Endothelial cell of umbilical vein (primary cell): ENCODE measurements at regions of chr1 and their contacts with region 1.

Region 1: GRCh38 chr1:70034403-70034802 is 171.0 kb downstream of the LRRC40 start:
- DNase-seq: peak; percentile 68
- H3K4me3 ChIP-seq: no peak overlapping the region
- H3K27ac ChIP-seq: no peak overlapping the region
- H3K4me1 ChIP-seq: no peaks in the 10 kb centered on the region
- H3K27me3 ChIP-seq: no peaks in the 10 kb centered on the region
- CTCF ChIP-seq: peak; percentile 26 to 29
- POLR2A ChIP-seq: no peak

Region 2: GRCh38 chr1:70083519-70083918 is 49.1 kb after region 1 on chr1:
- CTCF ChIA-PET with region 1: no interaction called
- POLR2A ChIA-PET with region 1: no interaction called
- dilution Hi-C with region 1: no loop called
- intact Hi-C with region 1: no loop called
- DNase-seq: no peak
- H3K4me3 ChIP-seq: no peak overlapping the region
- H3K27ac ChIP-seq: no peak overlapping the region
- H3K4me1 ChIP-seq: no peaks in the 10 kb centered on the region
- H3K27me3 ChIP-seq: no peaks in the 10 kb centered on the region
- CTCF ChIP-seq: no peak
- POLR2A ChIP-seq: no peak

Region 3: GRCh38 chr1:70134148-70134547 is 99.7 kb after region 1 on chr1:
- CTCF ChIA-PET with region 1: interaction called, 5 read pairs
- POLR2A ChIA-PET with region 1: no interaction called
- dilution Hi-C with region 1: no loop called
- intact Hi-C with region 1: loop called (anchors 2 kb)
- DNase-seq: no peak
- H3K4me3 ChIP-seq: no peak overlapping the region
- H3K27ac ChIP-seq: no peak overlapping the region
- H3K4me1 ChIP-seq: no peaks in the 10 kb centered on the region
- H3K27me3 ChIP-seq: no peaks in the 10 kb centered on the region
- CTCF ChIP-seq: no peak
- POLR2A ChIP-seq: no peak

Region 4: DNA sequence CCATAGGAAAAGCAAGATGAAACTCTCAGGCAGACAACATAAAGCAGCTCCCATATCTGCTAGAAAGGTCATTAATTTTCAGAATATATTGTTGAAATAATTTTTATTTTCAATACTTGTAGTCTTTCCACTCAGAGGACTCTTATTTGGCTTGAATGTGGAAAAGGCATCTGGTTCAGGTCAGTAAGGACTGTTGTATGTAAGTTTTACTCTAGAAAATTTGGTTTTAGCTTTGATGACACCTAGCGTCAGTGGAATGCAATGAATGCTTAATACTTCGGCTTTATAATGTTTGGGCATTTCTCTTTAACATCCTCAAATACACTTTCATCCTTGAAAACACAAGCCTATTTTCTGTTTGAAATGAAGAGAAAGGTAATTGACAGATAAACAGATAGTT is 107.7 kb after region 1 on chr1:
- CTCF ChIA-PET with region 1: interaction called, 15 read pairs
- POLR2A ChIA-PET with region 1: no interaction called
- dilution Hi-C with region 1: no loop called
- intact Hi-C with region 1: no loop called
- DNase-seq: no peak
- H3K4me3 ChIP-seq: no peak overlapping the region
- H3K27ac ChIP-seq: no peak overlapping the region
- H3K4me1 ChIP-seq: no peaks in the 10 kb centered on the region
- H3K27me3 ChIP-seq: no peaks in the 10 kb centered on the region
- CTCF ChIP-seq: no peak
- POLR2A ChIP-seq: no peak

Region 5: DNA sequence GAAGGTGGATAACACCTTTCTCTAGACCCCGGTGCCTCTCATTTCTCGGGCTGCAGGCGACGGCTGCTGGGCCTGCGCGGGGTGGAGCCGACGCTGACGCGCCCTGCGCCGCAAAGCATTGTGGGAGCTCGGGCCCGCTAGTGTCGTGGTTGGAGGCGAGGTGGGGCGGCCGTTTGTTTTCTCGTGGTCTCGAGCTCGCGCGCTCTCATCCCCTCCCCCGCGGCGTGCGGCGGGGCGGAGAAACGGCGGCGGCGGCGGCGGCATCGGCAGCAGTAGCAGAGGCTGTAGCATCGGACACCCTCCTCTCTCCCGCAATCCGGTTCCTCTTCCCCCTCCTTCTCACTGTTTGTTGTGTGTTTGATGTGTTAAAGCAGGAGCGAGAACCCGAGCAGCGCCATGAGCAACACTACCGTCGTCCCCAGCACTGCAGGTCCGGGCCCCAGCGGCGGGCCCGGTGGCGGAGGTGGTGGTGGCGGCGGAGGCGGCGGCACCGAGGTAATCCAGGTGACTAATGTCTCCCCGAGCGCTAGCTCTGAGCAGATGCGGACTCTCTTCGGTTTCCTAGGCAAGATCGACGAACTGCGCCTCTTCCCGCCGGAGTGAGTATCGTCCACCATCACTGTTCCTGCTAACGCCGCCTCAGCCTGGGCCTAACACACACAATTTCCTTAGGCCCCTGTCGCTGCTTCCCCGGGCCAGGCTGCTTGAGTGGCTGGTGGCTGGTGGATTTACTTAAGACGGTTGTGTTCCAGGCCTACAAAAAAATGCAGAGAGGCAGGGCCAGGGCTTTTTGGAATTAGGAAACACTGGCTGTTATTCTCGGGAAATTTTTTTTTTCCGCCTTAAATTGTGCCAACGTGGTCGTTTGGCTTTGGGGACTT is 187.1 kb after region 1 on chr1 and contains the start of gene SRSF11:
- CTCF ChIA-PET with region 1: interaction called, 5 read pairs
- POLR2A ChIA-PET with region 1: no interaction called
- dilution Hi-C with region 1: no loop called
- intact Hi-C with region 1: loop called (anchors 5 kb)
- DNase-seq: peak; percentile 95
- H3K4me3 ChIP-seq: peak within 1 kb of the TSS; percentile 55 to 94 (median 92)
- H3K27ac ChIP-seq: peak within 1 kb of the TSS; percentile 84
- H3K4me1 ChIP-seq: peaks cover 25% of the 10 kb centered on the region
- H3K27me3 ChIP-seq: no peaks in the 10 kb centered on the region
- CTCF ChIP-seq: no peak
- POLR2A ChIP-seq: peak; percentile 73
- total RNA-seq, gene SRSF11: 168 and 177 TPM in 2 replicates

Region 6: GRCh38 chr1:70234733-70235132 is 200.3 kb after region 1 on chr1:
- CTCF ChIA-PET with region 1: interaction called, 4 read pairs
- POLR2A ChIA-PET with region 1: no interaction called
- dilution Hi-C with region 1: no loop called
- intact Hi-C with region 1: loop called (anchors 5 kb)
- DNase-seq: no peak
- H3K4me3 ChIP-seq: no peak overlapping the region
- H3K27ac ChIP-seq: no peak overlapping the region
- H3K4me1 ChIP-seq: no peaks in the 10 kb centered on the region
- H3K27me3 ChIP-seq: no peaks in the 10 kb centered on the region
- CTCF ChIP-seq: no peak
- POLR2A ChIP-seq: no peak

Region 7: GRCh38 chr1:70487910-70488665 is 453.7 kb after region 1 on chr1:
- CTCF ChIA-PET with region 1: interaction called, 5 read pairs
- POLR2A ChIA-PET with region 1: no interaction called
- dilution Hi-C with region 1: no loop called
- intact Hi-C with region 1: loop called (anchors 2 kb)
- DNase-seq: peak; percentile 51
- H3K4me3 ChIP-seq: no peak overlapping the region
- H3K27ac ChIP-seq: no peak overlapping the region
- H3K4me1 ChIP-seq: no peaks in the 10 kb centered on the region
- H3K27me3 ChIP-seq: no peaks in the 10 kb centered on the region
- CTCF ChIP-seq: peak; percentile 63 to 81
- POLR2A ChIP-seq: no peak

Region 8: GRCh38 chr1:70509996-70510876 is 475.8 kb after region 1 on chr1:
- CTCF ChIA-PET with region 1: interaction called, 3 read pairs
- POLR2A ChIA-PET with region 1: no interaction called
- dilution Hi-C with region 1: no loop called
- intact Hi-C with region 1: loop called (anchors 1 kb)
- DNase-seq: peak; percentile 71
- H3K4me3 ChIP-seq: no peak overlapping the region
- H3K27ac ChIP-seq: no peak overlapping the region
- H3K4me1 ChIP-seq: no peaks in the 10 kb centered on the region
- H3K27me3 ChIP-seq: no peaks in the 10 kb centered on the region
- CTCF ChIP-seq: peak; percentile 44 to 46
- POLR2A ChIP-seq: no peak